Panc1 (cell line): ENCODE measurements at regions of chr5 and their contacts with region 1.

Region 1: GRCh38 chr5:19531374-19531952 is 456.5 kb downstream of the CDH18 start:
- DNase-seq: peak; percentile 64
- ATAC-seq: no peak
- H3K4me3 ChIP-seq: no peak overlapping the region
- H3K27ac ChIP-seq: no peak overlapping the region
- H3K4me1 ChIP-seq: no peaks in the 10 kb centered on the region
- H3K27me3 ChIP-seq: no peaks in the 10 kb centered on the region
- CTCF ChIP-seq: no peak

Region 2: GRCh38 chr5:18533137-18533536 is 998.3 kb before region 1 on chr5:
- CTCF ChIA-PET with region 1: no interaction called
- POLR2A ChIA-PET with region 1: interaction called, 10 read pairs
- in situ Hi-C with region 1: no loop called
- intact Hi-C with region 1: no loop called
- DNase-seq: no peak
- ATAC-seq: no peak
- H3K4me3 ChIP-seq: no peak overlapping the region
- H3K27ac ChIP-seq: no peak overlapping the region
- H3K4me1 ChIP-seq: no peaks in the 10 kb centered on the region
- H3K27me3 ChIP-seq: no peaks in the 10 kb centered on the region
- CTCF ChIP-seq: no peak

Region 3: DNA sequence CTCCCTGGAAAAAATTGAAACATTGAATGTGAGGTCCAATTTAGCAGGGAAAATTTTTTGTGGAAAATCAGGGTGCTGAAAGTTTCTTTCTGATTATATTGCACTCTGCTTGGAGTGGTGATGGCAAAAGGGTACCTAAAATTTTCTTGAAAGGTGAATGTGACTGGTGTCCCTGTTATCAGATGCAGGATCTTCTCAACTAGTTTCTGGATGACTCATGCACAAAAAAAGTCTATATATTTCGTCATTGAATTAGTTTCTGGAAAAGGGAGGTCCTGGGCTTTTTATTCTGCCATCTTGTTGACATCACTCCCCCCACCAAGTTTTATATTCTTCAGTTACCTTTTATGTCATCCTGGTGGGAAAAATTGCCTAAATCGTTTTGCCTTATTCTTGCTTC is 339.3 kb before region 1 on chr5:
- CTCF ChIA-PET with region 1: no interaction called
- POLR2A ChIA-PET with region 1: no interaction called
- in situ Hi-C with region 1: no loop called
- intact Hi-C with region 1: no loop called
- DNase-seq: no peak
- ATAC-seq: no peak
- H3K4me3 ChIP-seq: no peak overlapping the region
- H3K27ac ChIP-seq: no peak overlapping the region
- H3K4me1 ChIP-seq: no peaks in the 10 kb centered on the region
- H3K27me3 ChIP-seq: no peaks in the 10 kb centered on the region
- CTCF ChIP-seq: no peak

Region 4: DNA sequence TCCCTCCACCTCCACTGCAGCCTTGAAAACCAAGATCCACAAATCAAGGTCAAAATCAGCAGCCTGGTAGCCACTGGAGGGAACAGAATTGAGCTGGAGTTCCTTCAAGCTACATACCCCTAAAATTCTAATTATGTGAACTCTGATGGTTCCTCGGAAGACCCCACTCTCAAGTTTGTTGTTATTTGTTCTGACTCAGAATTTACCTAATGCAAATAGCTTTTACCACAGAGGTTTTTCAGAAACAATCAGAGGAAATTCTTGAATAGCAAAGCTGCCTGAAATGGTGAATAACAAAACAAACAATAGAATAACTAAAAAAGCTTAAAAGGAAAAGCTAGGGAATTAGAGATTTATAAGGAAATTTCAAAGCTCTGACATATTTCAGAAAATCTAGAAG is 236.5 kb after region 1 on chr5:
- CTCF ChIA-PET with region 1: no interaction called
- POLR2A ChIA-PET with region 1: no interaction called
- in situ Hi-C with region 1: no loop called
- intact Hi-C with region 1: no loop called
- DNase-seq: no peak
- ATAC-seq: no peak
- H3K4me3 ChIP-seq: no peak overlapping the region
- H3K27ac ChIP-seq: no peak overlapping the region
- H3K4me1 ChIP-seq: no peaks in the 10 kb centered on the region; the same call in 1 of the 2 replicates
- H3K27me3 ChIP-seq: no peaks in the 10 kb centered on the region
- CTCF ChIP-seq: no peak